Right ventricle myocardium inferior (tissue), 1 donor: ENCODE measurements at regions of chr20 and their contacts with region 1.

Region 1: GRCh38 chr20:1377984-1378734 is 14.7 kb downstream of the FKBP1A start:
- DNase-seq: no peak
- ATAC-seq: no peak

Region 2: DNA sequence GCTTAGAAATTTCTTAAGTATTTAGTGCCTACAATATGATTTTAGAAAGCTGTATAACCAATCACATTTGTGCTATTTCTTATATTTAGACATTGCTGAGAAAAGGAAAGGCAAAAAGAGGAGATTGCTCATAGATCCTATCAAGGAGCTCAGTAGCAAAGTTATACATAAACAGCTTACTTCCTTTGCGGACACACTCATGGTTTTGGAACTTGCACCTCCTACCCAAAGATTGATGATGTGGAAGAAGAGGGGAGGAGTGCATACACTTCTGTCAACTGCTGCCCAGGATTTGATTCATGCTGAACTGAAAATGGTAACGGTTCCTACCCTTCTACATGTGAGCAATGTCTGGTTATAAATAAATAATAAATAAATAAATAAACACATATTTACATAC is 135.6 kb before region 1 on chr20:
- intact Hi-C with region 1: no loop called
- DNase-seq: no peak
- ATAC-seq: no peak

Region 3: GRCh38 chr20:1336699-1337367 is 41.3 kb before region 1 on chr20:
- intact Hi-C with region 1: loop called (anchors 2 kb)
- DNase-seq: peak; percentile 88
- ATAC-seq: peak; percentile 91

Region 4: GRCh38 chr20:1450926-1451491 is 72.8 kb after region 1 on chr20:
- intact Hi-C with region 1: no loop called
- DNase-seq: no peak
- ATAC-seq: no peak